Right lobe of liver (tissue), 6 donors: ENCODE measurements at regions of chr9 and their contacts with region 1.

Region 1: DNA sequence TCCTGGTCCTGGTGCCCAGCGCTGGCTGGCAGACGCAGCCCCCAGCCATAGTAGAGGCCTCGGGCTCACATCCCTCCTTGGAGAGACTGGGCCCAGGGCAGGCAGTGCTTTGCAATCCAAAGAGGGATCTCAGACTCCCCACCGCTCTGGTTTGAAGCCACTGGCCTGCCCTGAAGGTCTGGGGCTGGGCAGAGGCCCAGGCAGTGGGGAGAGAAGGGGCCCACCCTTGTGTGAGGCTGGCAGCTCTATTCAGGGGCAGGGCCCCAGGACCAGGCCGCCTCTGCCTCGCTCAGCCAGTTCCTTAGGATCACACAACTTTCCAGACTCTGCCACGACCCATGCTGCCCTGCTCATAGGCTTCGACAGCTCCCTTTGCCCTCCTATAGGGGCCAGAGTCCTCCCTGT is 10.7 kb upstream of the SEC16A start:
- DNase-seq: peak in 1 of 3 donors; percentile 14
- ATAC-seq: peak in 2 of 4 donors; percentile 12 to 19
- H3K4me3 ChIP-seq: no peak overlapping the region
- H3K27ac ChIP-seq: no peak overlapping the region
- H3K4me1 ChIP-seq: peaks cover 0 to 3% (median under 1%) of the 10 kb centered on the region in 4 donors
- H3K27me3 ChIP-seq: no peaks in the 10 kb centered on the region
- CTCF ChIP-seq: no peak
- POLR2A ChIP-seq: no peak

Region 2: GRCh38 chr9:136385015-136385414 is 108.6 kb before region 1 on chr9:
- intact Hi-C with region 1: no loop called
- DNase-seq: no peak
- ATAC-seq: no peak
- H3K4me3 ChIP-seq: no peak overlapping the region
- H3K27ac ChIP-seq: no peak overlapping the region
- H3K4me1 ChIP-seq: no peaks in the 10 kb centered on the region
- H3K27me3 ChIP-seq: no peaks in the 10 kb centered on the region
- CTCF ChIP-seq: no peak
- POLR2A ChIP-seq: no peak

Region 3: DNA sequence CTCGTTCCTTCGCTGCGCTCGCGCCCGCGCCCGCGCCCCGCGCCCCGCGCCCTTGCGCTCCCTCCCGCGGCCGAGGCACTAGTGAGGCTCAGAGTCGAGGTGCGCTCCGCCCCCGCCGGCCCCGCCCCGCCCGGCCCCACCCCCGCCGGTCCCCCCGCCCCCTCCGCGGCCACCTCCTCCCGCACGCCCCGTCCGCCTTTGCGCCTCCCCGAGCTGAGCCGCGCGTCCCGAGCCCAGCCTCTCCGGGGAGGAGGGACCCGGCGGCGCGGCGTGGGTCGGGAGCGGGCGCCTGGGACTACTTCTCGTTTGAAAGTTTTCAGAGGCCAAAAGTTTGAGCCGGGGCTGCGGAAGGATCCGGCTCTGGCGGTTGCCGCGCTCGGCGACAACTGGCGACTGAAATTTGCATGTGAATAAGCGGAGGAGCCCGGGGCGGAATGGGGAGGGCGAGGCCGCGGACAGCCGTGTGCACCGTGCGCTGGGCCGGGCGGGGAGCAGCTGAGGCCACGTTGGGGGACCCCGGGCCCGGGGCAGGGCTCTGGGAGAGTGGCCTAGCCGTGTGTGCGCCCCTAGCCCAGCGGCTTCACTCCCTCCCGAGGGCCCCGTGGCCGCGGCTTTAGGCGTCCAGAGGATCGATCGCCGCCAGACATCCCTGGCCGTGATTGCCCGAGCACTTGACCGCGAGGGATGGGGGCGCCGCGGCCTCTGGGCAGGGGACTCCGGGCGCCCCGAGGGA is 52.6 kb after region 1 on chr9 and contains the start of gene NOTCH1:
- intact Hi-C with region 1: loop called in 1 of 2 experiments (anchors 10 kb)
- DNase-seq: peak; percentile 96 to 97 (median 96)
- ATAC-seq: peak; percentile 74 to 82 (median 78)
- H3K4me3 ChIP-seq: peak within 1 kb of the TSS; percentile 71 to 91 (median 85)
- H3K27ac ChIP-seq: peak within 1 kb of the TSS; percentile 85 to 99 (median 98)
- H3K4me1 ChIP-seq: peaks cover 0 to 33% (median 17%) of the 10 kb centered on the region in 4 donors
- H3K27me3 ChIP-seq: no peaks in the 10 kb centered on the region
- CTCF ChIP-seq: peak in 1 of 4 donors; percentile 37
- POLR2A ChIP-seq: peak; percentile 72
- total RNA-seq, gene NOTCH1: 17.4 to 26.2 (median 19.3) TPM